ENCODE measurements at regions of chr22 and their contacts with region 1.

Region 1: GRCh38 chr22:19844377-19845053 is 10.2 kb downstream of the GNB1L start:
- DNase-seq: peak; percentile 71
- H3K4me3 ChIP-seq: peak overlapping the region; percentile 22
- H3K27ac ChIP-seq: peak overlapping the region; percentile 68
- H3K4me1 ChIP-seq: peaks cover 45% of the 10 kb centered on the region
- CTCF ChIP-seq: no peak

Region 2: DNA sequence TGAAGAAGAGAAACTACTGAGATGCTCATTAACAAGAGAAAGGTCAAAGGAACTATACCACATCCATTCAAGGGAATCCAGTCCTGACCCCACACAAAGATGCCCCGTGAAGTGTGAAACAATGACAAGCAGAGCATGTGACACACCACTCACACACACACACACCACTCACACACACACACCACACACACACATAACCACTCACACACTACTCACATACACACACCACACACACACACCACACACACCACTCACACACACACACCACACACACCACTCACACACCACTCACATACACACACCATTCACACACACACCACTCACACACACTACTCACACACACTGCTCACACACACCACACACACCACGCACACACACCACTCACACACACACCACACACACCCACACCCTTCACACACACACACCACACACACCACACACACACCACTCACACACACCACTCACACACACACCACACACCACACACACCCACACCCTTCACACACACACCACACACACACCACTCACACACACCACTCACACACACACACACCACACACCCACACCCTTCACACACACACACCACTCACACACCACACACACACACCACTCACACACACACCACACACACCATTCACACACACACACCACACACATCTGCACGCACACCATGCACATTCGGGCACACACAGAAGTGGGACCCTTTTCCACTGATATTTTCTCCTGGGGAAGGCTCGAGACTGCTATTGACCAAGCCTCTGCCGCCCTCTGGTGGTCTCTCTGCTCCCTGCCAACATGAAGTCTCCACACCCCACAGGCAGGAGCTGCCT is 65.0 kb after region 1 on chr22:
- CTCF ChIA-PET with region 1: interaction called, 3 read pairs
- POLR2A ChIA-PET with region 1: no interaction called
- intact Hi-C with region 1: loop called (anchors 5 kb)
- DNase-seq: peak; percentile 89
- H3K4me3 ChIP-seq: no peak overlapping the region
- H3K27ac ChIP-seq: no peak overlapping the region
- H3K4me1 ChIP-seq: peaks cover 9% of the 10 kb centered on the region
- CTCF ChIP-seq: peak; percentile 97

Measured in OCI-LY7 (cell line).